ENCODE measurements at regions of chr10 and their contacts with region 1.

Region 1: GRCh38 chr10:113982769-113983168 is 60.9 kb upstream of the ADRB1 start:
- DNase-seq: no peak
- ATAC-seq: no peak
- H3K4me3 Mint-ChIP-seq: no peak overlapping the region
- H3K27ac Mint-ChIP-seq: no peak overlapping the region
- H3K4me1 Mint-ChIP-seq: no peaks in the 10 kb centered on the region
- H3K27me3 Mint-ChIP-seq: no peaks in the 10 kb centered on the region
- CTCF ChIP-seq: no peak

Region 2: DNA sequence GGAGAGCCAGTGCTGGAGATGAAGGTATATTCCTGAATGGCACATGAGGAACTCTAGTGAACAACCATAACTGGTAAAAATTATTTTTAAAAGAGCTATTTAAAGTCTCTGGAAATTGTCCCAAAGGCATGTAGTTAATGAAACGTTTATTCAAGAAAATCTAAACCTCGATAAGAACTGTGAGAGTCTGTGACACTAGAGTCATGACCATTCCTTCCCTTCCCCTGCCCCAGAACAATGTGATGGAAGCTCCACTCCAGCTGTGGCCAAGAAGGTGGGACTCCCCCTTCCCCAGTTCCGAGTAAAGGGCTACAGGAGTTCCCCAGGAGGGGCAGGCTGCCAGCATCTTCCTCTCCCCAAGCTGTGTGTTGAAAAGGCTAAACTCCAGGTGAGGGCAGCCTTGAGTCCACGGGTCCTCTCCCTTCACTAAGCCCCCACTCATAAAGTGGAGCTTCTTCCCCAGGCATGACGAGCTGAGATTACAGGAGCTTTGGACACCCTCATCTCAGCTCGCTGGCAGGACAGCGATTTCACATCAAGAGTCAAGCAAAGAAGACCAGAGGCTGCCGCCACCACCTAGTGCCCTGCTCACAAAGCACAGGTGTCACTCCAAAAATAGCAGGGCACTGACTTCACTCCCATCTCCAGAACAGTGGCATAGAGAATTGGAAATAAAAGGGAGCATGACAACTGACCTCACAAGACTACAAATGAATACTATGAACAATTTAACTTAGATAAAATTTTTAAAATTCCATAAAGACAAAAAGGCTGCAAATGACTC is 59.8 kb before region 1 on chr10:
- CTCF ChIA-PET with region 1: no interaction called
- POLR2A ChIA-PET with region 1: no interaction called
- intact Hi-C with region 1: no loop called
- DNase-seq: no peak
- ATAC-seq: no peak
- H3K4me3 Mint-ChIP-seq: no peak overlapping the region
- H3K27ac Mint-ChIP-seq: no peak overlapping the region
- H3K4me1 Mint-ChIP-seq: no peaks in the 10 kb centered on the region
- H3K27me3 Mint-ChIP-seq: peaks cover 13% of the 10 kb centered on the region
- CTCF ChIP-seq: no peak

Region 3: GRCh38 chr10:114095559-114096337 is 113.0 kb after region 1 on chr10:
- CTCF ChIA-PET with region 1: no interaction called
- POLR2A ChIA-PET with region 1: no interaction called
- intact Hi-C with region 1: loop called (anchors 5 kb)
- DNase-seq: no peak
- ATAC-seq: peak; percentile 51
- H3K4me3 Mint-ChIP-seq: peak overlapping the region; percentile 49
- H3K27ac Mint-ChIP-seq: peak overlapping the region; percentile 22
- H3K4me1 Mint-ChIP-seq: peaks cover 61% of the 10 kb centered on the region
- H3K27me3 Mint-ChIP-seq: peaks cover 9% of the 10 kb centered on the region
- CTCF ChIP-seq: no peak